ENCODE measurements at regions of chr1 and their contacts with region 1.

Region 1: GRCh38 chr1:206106328-206107167 is 10.6 kb downstream of the AVPR1B start:
- DNase-seq: peak; percentile 72
- H3K4me3 ChIP-seq: no peak overlapping the region
- H3K27ac ChIP-seq: no peak overlapping the region
- H3K27me3 ChIP-seq: peaks cover 3% of the 10 kb centered on the region
- CTCF ChIP-seq: peak; percentile 91

Region 2: GRCh38 chr1:205488086-205488723 is 618.3 kb before region 1 on chr1:
- in situ Hi-C with region 1: no loop called
- DNase-seq: peak; percentile 33
- H3K4me3 ChIP-seq: no peak overlapping the region
- H3K27ac ChIP-seq: no peak overlapping the region
- H3K27me3 ChIP-seq: peaks cover 33% of the 10 kb centered on the region
- CTCF ChIP-seq: peak; percentile 88

Region 3: GRCh38 chr1:205775015-205775716 is 331.4 kb before region 1 on chr1 and contains the start of gene RAB29:
- in situ Hi-C with region 1: loop called (anchors 25 kb)
- DNase-seq: peak; percentile 72
- H3K4me3 ChIP-seq: peak within 1 kb of the TSS; percentile 89
- H3K27ac ChIP-seq: peak within 1 kb of the TSS; percentile 31
- H3K27me3 ChIP-seq: no peaks in the 10 kb centered on the region
- CTCF ChIP-seq: no peak

Region 4: GRCh38 chr1:205919026-205919746 is 187.4 kb before region 1 on chr1:
- in situ Hi-C with region 1: loop called (anchors 25 kb)
- DNase-seq: peak; percentile 88
- H3K4me3 ChIP-seq: no peak overlapping the region
- H3K27ac ChIP-seq: no peak overlapping the region
- H3K27me3 ChIP-seq: no peaks in the 10 kb centered on the region
- CTCF ChIP-seq: peak; percentile 95

Region 5: GRCh38 chr1:205977402-205978014 is 129.0 kb before region 1 on chr1:
- in situ Hi-C with region 1: loop called (anchors 25 kb)
- DNase-seq: peak; percentile 55
- H3K4me3 ChIP-seq: no peak overlapping the region
- H3K27ac ChIP-seq: no peak overlapping the region
- H3K27me3 ChIP-seq: no peaks in the 10 kb centered on the region
- CTCF ChIP-seq: peak; percentile 99

Region 6: GRCh38 chr1:206489980-206490770 is 383.6 kb after region 1 on chr1:
- in situ Hi-C with region 1: no loop called
- DNase-seq: peak; percentile 68
- H3K4me3 ChIP-seq: no peak overlapping the region
- H3K27ac ChIP-seq: peak overlapping the region; percentile 72
- H3K27me3 ChIP-seq: no peaks in the 10 kb centered on the region
- CTCF ChIP-seq: peak; percentile 99